ENCODE measurements at regions of chr11 and their contacts with region 1.

Region 1: GRCh38 chr11:63478896-63479295 is 12.1 kb downstream of the PLAAT5 start:
- DNase-seq: peak; percentile 76
- H3K4me3 ChIP-seq: peak overlapping the region in 1 of 2 experiments; percentile 13; a peak in 1 of 4 replicates
- H3K27ac ChIP-seq: no peak overlapping the region
- H3K4me1 ChIP-seq: no peaks in the 10 kb centered on the region
- H3K27me3 ChIP-seq: no peaks in the 10 kb centered on the region
- CTCF ChIP-seq: peak; percentile 90
- EP300 ChIP-seq: no peak
- RAD21 ChIP-seq: peak; percentile 98

Region 2: GRCh38 chr11:63490551-63491239 is 11.8 kb after region 1 on chr11 and contains the start of gene PLAAT5:
- CTCF ChIA-PET with region 1: interaction called, 31 read pairs
- POLR2A ChIA-PET with region 1: no interaction called
- DNase-seq: peak; percentile 50
- H3K4me3 ChIP-seq: peak within 1 kb of the TSS in 1 of 2 experiments; percentile 33; a peak in 3 of 4 replicates
- H3K27ac ChIP-seq: no peak within 1 kb of the TSS
- H3K4me1 ChIP-seq: no peaks in the 10 kb centered on the region; a peak in 1 of 4 replicates
- H3K27me3 ChIP-seq: peaks cover 45% of the 10 kb centered on the region; the same call in 1 of the 2 replicates
- CTCF ChIP-seq: no peak
- EP300 ChIP-seq: no peak
- RAD21 ChIP-seq: no peak
- polyA plus RNA-seq, gene PLAAT5: not detected in 2 replicates

Region 3: DNA sequence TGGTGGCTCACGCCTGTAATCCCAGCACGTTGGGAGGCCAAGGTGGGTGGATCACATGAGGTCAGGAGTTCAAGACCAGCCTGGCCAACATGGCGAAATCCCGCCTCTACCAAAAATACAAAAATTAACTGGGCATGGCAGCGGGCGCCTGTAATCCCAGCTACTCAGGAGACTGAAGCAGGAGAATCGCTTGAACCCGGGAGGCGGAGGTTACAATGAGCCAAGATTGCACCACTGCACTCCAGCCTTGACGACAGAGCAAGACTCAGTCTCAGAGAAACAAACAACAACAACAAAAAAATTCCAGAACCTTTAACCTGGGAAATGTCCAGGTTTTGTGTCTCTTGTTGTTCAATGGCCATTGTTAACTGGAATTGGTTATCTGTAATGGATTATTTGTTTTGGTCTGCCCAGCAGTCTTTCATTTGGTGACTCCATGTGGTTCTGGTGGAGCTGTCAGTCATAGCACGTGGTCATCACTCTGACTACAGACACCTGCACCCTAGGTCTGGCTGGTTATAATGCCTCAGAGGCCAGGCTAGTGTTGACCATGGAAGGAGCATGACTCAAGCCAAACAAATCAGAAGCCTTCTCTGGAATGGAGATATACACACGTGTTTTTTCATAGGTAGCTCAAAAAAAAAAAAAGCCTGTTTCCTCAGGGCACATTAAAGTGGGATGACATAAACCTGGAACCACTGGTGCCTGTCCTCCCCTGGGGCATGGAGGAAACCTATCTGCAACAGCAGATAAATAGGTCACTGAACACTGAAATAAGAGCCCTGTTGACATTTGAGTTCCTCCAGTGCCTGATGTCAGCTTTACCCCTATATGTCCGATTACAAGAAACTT is 143.3 kb after region 1 on chr11:
- CTCF ChIA-PET with region 1: interaction called, 39 read pairs
- POLR2A ChIA-PET with region 1: no interaction called
- DNase-seq: no peak
- H3K4me3 ChIP-seq: no peak overlapping the region
- H3K27ac ChIP-seq: no peak overlapping the region
- H3K4me1 ChIP-seq: peaks cover 0 to 17% of the 10 kb centered on the region in 2 experiments; a peak in 2 of 4 replicates
- H3K27me3 ChIP-seq: no peaks in the 10 kb centered on the region
- CTCF ChIP-seq: no peak
- EP300 ChIP-seq: no peak
- RAD21 ChIP-seq: no peak

Region 4: DNA sequence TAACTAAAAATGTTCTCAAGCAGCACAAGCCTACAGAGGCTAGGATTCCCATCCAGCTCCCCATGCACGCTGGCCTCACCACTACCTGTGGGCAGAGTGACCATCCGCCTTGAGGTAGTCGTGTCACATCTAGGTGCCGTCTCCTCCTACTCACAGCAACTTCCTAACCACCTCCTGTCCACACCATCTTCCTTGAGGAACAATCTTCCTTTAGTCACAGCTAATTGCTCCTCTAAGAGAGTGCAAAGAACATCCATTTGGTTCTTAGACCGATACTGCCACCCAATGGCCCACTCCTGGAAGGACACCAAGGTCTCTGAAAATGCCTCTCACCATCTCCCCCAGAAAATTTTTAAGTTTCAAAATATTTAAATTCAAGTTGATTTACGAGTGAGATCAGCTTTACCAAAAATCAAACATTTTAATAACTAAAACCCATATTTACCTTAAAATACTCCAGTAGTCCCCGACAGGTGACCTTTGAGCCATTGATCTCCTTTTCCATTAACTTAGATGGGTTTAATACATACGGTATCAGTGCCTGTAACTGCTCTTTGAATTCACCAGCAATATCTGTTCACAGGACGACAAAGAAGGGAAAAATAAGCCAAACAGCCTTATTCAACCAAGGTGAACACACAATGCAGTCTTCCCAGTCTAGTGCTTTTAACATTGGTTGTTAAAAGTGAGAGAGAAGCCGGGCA is 157.0 kb after region 1 on chr11:
- CTCF ChIA-PET with region 1: interaction called, 146 read pairs
- POLR2A ChIA-PET with region 1: no interaction called
- DNase-seq: peak; percentile 67
- H3K4me3 ChIP-seq: no peak overlapping the region; a peak in 1 of 4 replicates
- H3K27ac ChIP-seq: no peak overlapping the region
- H3K4me1 ChIP-seq: no peaks in the 10 kb centered on the region
- H3K27me3 ChIP-seq: no peaks in the 10 kb centered on the region
- CTCF ChIP-seq: peak; percentile 88
- EP300 ChIP-seq: no peak
- RAD21 ChIP-seq: peak; percentile 91

Region 5: DNA sequence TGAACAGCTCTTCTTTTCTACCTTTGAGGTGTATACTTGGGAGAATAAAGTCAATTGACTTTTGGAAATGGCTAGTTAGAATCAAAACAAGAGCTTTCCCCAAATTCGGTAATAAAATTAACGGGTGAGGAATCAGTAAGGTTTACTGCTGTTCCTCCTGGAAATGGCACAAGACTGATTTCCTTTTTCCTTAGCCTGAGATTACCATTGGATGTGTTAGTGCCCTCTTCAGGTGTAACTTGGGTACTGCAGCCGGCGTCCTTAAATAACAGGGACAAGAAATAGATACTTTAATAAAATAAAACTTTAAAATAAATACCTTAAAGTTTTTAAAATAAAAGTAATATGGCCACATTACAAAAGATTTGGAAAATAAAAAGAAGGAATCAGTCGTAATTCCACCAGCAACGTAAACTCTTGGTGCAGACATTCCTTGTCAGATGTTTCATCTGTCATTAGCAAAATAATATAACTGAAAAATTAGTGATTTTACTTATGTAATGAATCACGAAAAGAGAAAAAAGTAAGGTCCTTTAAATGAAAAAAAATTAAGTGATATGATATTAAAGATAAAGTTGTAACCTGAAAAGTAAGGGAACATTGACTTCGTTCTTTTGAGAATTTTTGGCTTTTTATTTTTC is 259.9 kb after region 1 on chr11:
- CTCF ChIA-PET with region 1: interaction called, 32 read pairs
- POLR2A ChIA-PET with region 1: no interaction called
- DNase-seq: peak; percentile 50
- H3K4me3 ChIP-seq: no peak overlapping the region; a peak in 1 of 4 replicates
- H3K27ac ChIP-seq: no peak overlapping the region
- H3K4me1 ChIP-seq: 0 out of 4 replicates have a peak, but pooled peaks cover 0 to 14% of the 10 kb centered on the region in 2 experiments
- H3K27me3 ChIP-seq: no peaks in the 10 kb centered on the region
- CTCF ChIP-seq: peak; percentile 82
- EP300 ChIP-seq: no peak
- RAD21 ChIP-seq: peak; percentile 79

Region 6: DNA sequence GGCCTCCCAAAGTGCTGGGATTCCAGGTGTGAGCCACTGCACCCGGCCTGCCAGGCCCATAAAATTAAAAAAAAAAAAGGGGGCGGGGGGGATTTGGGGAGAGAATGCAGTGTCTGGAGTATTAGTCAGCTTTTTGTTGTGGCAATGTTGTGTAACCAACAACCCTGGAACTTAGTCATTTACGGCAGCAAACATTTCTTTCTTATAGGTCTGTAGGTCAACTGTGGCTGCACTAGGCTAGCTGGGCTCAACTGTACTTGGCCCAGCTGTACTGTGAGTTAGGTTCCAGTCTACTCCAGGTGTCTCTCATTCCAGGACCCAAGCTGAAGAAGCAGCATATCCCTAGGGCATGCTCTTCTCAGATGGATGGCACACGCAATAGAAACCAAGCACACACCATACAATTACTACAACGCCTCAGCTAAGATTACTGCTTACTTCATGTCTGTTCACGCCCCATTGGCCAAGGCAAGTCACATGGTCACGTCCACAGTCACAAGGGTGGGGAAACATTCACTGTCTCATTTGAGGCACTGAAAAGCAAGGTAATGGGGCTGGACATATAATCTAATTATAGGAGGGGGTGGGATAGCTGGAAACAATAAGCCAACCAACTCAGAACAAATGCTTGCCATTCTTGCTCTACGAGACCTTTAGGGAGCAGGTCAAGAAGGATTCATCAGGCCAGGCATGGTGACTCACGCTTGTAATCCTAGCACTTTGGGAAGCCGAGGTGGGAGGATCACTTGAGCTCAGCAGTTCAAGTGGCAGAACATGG is 323.9 kb after region 1 on chr11:
- CTCF ChIA-PET with region 1: no interaction called
- POLR2A ChIA-PET with region 1: no interaction called
- DNase-seq: no peak
- H3K4me3 ChIP-seq: no peak overlapping the region
- H3K27ac ChIP-seq: no peak overlapping the region
- H3K4me1 ChIP-seq: no peaks in the 10 kb centered on the region
- H3K27me3 ChIP-seq: no peaks in the 10 kb centered on the region
- CTCF ChIP-seq: no peak
- EP300 ChIP-seq: no peak
- RAD21 ChIP-seq: no peak

Measured in SK-N-SH (cell line).